ENCODE measurements at regions of chr3 and their contacts with region 1.

Region 1: DNA sequence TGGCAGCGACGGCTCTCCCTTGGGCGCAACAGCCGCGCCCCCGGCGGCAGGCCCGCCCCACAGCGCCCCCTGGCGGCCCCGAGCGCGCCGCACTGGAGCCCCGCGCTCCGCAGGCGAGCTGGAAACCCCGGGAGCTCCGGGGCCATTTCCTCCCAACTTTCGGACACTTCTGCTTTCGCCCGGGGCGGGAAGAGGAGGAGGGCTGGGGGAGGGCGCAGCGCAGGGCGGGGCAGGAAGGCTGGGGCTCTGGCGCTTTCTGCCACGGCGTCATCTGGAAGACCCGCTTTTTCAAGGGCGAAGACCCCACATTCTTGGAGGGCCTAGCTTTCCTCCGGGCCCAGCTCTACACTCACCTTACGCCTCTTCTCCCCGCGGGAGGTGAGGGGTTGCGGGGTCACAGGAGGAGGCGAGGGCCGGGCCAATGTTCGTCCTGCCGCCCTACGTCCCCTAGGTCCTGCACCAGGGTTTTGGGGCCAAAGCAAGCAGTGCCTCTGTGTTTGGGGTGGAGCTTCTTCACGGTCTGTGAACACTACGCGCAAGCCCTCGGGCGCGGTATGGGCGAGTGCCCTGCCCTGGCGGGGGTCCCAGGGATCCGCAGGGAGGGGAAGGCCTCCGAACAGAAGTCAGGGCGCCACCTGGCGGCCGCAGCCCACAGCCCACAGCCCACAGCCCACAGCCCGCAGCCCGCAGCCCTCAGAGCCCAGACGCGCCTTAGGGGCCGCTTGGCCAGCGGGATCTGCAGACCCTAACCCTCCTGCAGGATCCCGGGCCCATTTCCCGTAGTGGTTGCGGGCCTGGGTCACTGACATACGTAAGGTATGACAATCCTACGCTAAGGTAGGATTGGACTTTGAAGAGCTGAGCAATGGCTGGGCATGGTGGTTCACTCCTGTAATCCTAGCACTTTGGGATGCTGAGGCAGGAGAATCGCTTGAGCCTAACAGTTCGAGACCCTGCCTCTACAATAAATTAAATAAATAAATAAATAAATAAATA is 31.1 kb downstream of the FOXL2 start:
- DNase-seq: peak; percentile 93
- H3K4me3 ChIP-seq: peak overlapping the region; percentile 65 to 86 (median 76)
- H3K27ac ChIP-seq: peak overlapping the region; percentile 93 to 98 (median 96)
- H3K4me1 ChIP-seq: peaks cover 0 to 23% (median 21%) of the 10 kb centered on the region in 4 donors
- H3K27me3 ChIP-seq: no peaks in the 10 kb centered on the region
- CTCF ChIP-seq: peak; percentile 78 to 97 (median 97)
- EP300 ChIP-seq: no peak
- POLR2A ChIP-seq: peak; percentile 56

Region 2: GRCh38 chr3:138417559-138417982 is 498.2 kb before region 1 on chr3:
- in situ Hi-C with region 1: loop called in 1 of 4 experiments (anchors 10 kb)
- intact Hi-C with region 1: loop called (anchors 10 kb)
- DNase-seq: peak; percentile 76
- H3K4me3 ChIP-seq: no peak overlapping the region
- H3K27ac ChIP-seq: no peak overlapping the region
- H3K4me1 ChIP-seq: no peaks in the 10 kb centered on the region
- H3K27me3 ChIP-seq: peaks cover 4% of the 10 kb centered on the region
- CTCF ChIP-seq: peak; percentile 76 to 92 (median 90)
- EP300 ChIP-seq: no peak
- POLR2A ChIP-seq: no peak

Region 3: DNA sequence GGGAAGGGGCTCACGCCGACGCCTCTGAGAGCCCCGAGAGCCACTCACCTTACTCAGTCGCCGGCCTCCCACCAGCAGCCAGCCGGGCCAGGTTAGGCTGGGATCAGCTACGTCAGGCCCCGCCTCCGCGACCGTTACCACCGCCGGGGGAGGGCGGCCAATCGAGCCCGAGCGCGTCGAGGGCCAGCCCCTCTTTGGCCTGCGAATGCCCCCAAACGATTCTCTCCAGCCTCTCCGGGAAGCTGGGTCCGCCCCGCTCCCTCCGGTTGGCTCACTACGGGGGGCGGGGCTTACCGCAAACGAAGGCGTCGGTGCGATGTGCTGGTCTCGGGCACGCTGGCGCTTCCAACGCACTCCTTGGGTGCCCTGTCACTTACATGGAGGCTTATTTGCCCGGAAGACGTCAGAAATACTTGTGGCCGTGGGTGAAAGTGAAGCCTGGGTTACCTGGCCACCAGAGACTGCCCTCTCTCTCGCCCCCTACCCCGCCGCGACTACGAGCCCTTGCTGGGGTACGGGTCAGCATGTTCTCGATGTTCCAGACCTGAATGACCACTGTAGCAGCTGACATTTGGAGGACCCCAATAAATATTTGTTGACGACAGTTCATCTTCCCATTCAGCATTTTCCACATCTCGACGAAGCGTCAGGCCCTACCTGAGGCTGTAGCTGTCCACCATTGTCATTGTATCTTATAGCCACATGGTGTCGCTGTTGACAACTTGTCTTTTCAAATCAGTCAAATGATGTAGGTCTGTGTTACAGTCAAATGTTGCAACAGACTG is 321.5 kb before region 1 on chr3 and contains the start of gene CEP70:
- in situ Hi-C with region 1: loop called in 3 of 4 experiments (anchors 5 to 10 kb)
- intact Hi-C with region 1: loop called (anchors 2 kb)
- DNase-seq: peak; percentile 96
- H3K4me3 ChIP-seq: peak within 1 kb of the TSS; percentile 49 to 75 (median 58)
- H3K27ac ChIP-seq: peak within 1 kb of the TSS; percentile 88 to 95 (median 92)
- H3K4me1 ChIP-seq: peaks cover 6 to 33% (median 15%) of the 10 kb centered on the region in 4 donors
- H3K27me3 ChIP-seq: no peaks in the 10 kb centered on the region
- CTCF ChIP-seq: peak; percentile 87 to 97 (median 89)
- EP300 ChIP-seq: no peak
- POLR2A ChIP-seq: peak; percentile 97
- total RNA-seq, gene CEP70: 4.1 to 46.8 (median 22.6) TPM

Region 4: GRCh38 chr3:138694287-138695007 is 221.4 kb before region 1 on chr3:
- in situ Hi-C with region 1: loop called in 2 of 4 experiments (anchors 5 to 10 kb)
- intact Hi-C with region 1: no loop called
- DNase-seq: no peak
- H3K4me3 ChIP-seq: no peak overlapping the region
- H3K27ac ChIP-seq: no peak overlapping the region
- H3K4me1 ChIP-seq: no peaks in the 10 kb centered on the region
- H3K27me3 ChIP-seq: no peaks in the 10 kb centered on the region
- CTCF ChIP-seq: no peak
- EP300 ChIP-seq: no peak
- POLR2A ChIP-seq: no peak

Region 5: DNA sequence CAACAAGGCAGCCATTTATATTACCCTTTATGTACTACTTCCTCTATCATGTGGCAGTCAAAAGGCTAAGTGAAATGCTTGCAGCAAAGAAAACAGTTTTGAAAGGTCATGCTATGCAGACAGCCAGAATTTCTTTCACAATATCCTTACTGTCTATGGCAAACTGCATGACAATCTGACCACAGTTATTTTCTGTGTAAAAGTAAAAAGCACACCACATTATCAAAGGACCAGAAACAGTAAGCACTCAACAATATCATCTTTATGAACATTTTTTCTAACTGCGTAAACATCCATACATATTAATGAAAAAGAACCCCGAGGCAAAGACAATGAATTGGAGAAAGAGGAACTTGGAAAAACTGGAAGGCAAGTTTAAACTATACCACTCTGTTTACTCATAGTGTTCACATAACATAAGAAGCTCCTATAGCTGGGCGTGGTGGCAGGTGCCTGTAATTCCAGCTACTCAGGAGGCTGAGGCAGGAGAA is 129.0 kb before region 1 on chr3:
- in situ Hi-C with region 1: loop called in 1 of 4 experiments (anchors 10 kb)
- intact Hi-C with region 1: no loop called
- DNase-seq: no peak
- H3K4me3 ChIP-seq: no peak overlapping the region
- H3K27ac ChIP-seq: peak overlapping the region in 3 of 4 donors; percentile 2 to 35 (median 27)
- H3K4me1 ChIP-seq: peaks cover 0 to 3% (median 0%) of the 10 kb centered on the region in 4 donors
- H3K27me3 ChIP-seq: no peaks in the 10 kb centered on the region
- CTCF ChIP-seq: no peak
- EP300 ChIP-seq: no peak
- POLR2A ChIP-seq: no peak

Region 6: GRCh38 chr3:138834359-138835212 is 81.2 kb before region 1 on chr3 and contains the start of gene PIK3CB:
- in situ Hi-C with region 1: no loop called
- intact Hi-C with region 1: loop called (anchors 5 kb)
- DNase-seq: peak; percentile 93
- H3K4me3 ChIP-seq: peak within 1 kb of the TSS; percentile 71 to 90 (median 77)
- H3K27ac ChIP-seq: peak within 1 kb of the TSS; percentile 95 to 97 (median 96)
- H3K4me1 ChIP-seq: peaks cover 6 to 22% (median 15%) of the 10 kb centered on the region in 4 donors
- H3K27me3 ChIP-seq: no peaks in the 10 kb centered on the region
- CTCF ChIP-seq: peak in 4 of 5 experiments; percentile 37 to 72 (median 59)
- EP300 ChIP-seq: no peak
- POLR2A ChIP-seq: peak; percentile 88
- total RNA-seq, gene PIK3CB: 52.4 to 98.4 (median 76.0) TPM